CD4-positive, alpha-beta T cell (primary cell): ENCODE measurements at regions of chr7 and their contacts with region 1.

Region 1: DNA sequence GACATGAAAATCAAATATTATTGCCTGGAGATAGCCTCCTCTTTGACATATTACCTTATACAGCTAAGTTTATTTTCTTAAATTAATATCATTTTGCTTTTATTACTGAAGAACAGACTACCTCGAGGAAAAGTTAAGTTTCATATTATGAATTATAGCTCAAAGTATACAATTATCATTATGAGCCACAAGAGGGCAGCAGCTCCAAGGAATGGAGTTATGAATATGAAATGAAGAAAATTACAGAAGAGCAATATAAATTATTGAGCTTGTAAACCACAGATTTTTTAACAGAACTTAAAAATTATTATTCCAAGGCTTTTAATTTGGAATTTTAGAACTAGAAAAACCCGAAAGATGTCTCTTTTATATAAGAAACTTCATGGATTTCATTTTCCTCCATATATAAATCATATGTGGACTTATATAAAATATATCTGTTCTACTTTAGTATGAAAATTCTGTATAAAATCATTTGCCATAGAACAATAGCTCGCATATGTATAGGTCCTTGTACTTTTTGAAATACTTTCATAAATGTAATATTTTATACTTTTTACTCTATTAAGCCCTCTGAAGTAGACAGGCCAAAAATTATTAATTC is 40.1 kb downstream of the IQUB start:
- DNase-seq: peak in 9 of 14 experiments; percentile 1 to 68 (median 17)
- ATAC-seq: no peak
- H3K4me3 ChIP-seq: no peak overlapping the region
- H3K4me3 Mint-ChIP-seq: no peak overlapping the region
- H3K27ac ChIP-seq: no peak overlapping the region
- H3K27ac Mint-ChIP-seq: no peak overlapping the region
- H3K4me1 ChIP-seq: no peaks in the 10 kb centered on the region
- H3K4me1 Mint-ChIP-seq: no peaks in the 10 kb centered on the region
- H3K27me3 ChIP-seq: peaks cover 0 to 5% of the 10 kb centered on the region in 2 experiments
- H3K27me3 Mint-ChIP-seq: peaks cover 27% of the 10 kb centered on the region
- CTCF ChIP-seq: peak; percentile 86

Region 2: GRCh38 chr7:123534383-123535260 is 40.3 kb after region 1 on chr7 and contains the start of gene IQUB:
- CTCF ChIA-PET with region 1: interaction called, 4 read pairs
- POLR2A ChIA-PET with region 1: interaction called, 4 read pairs
- intact Hi-C with region 1: loop called (anchors 1 to 2 kb)
- DNase-seq: peak; percentile 88 to 99 (median 96)
- ATAC-seq: peak; percentile 83
- H3K4me3 ChIP-seq: peak within 1 kb of the TSS; percentile 78
- H3K4me3 Mint-ChIP-seq: peak within 1 kb of the TSS; percentile 91
- H3K27ac ChIP-seq: peak within 1 kb of the TSS in 1 of 2 donors; percentile 79
- H3K27ac Mint-ChIP-seq: peak within 1 kb of the TSS; percentile 40
- H3K4me1 ChIP-seq: peaks cover 23% of the 10 kb centered on the region
- H3K4me1 Mint-ChIP-seq: peaks cover 38% of the 10 kb centered on the region
- H3K27me3 ChIP-seq: peaks cover 4 to 12% of the 10 kb centered on the region in 2 experiments
- H3K27me3 Mint-ChIP-seq: peaks cover 21% of the 10 kb centered on the region
- CTCF ChIP-seq: no peak
- total RNA-seq, gene IQUB: not detected

Region 3: DNA sequence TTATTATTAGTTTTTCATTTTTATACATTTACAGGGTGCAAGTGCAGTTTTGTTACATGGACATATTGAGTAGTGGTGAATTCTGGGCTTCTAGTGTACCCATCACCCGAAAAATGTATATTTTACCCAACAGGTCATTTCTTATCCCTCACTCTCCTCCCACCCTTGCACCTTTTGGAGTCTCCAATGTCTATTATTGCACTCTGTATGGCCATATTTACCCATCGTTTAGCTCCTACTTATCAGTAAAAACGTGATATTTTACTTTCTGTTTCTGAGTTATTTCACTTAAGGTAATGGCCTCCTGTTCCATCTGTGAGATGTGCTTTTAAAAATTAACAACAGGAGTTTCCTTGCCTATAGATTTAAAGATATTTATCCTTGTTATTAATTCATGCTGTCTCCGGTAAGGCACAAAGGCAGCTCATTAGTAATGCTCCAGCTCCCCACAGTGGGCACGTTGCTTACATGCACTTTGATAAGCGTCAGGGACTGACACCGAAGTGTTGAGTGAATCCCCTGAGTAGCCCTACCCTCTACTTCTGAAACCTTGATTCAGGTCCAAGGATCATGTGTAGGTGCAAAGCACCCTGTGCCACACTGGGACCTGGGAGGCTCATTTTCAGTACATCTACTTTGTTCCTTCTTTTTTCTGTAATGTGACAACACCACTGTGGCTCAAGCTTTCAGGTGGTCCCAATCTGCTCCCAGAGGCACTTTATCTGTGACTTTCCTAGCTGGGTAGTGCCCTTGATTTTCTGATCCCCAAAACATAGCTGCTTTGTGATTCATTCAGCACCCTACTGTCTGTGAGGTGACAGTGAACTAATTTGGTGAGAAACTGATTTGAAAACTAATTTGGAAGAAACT is 377.9 kb after region 1 on chr7:
- CTCF ChIA-PET with region 1: interaction called, 3 read pairs
- POLR2A ChIA-PET with region 1: no interaction called
- intact Hi-C with region 1: loop called (anchors 1 to 2 kb)
- DNase-seq: peak in 11 of 14 experiments; percentile 3 to 54 (median 12)
- ATAC-seq: peak; percentile 39
- H3K4me3 ChIP-seq: no peak overlapping the region
- H3K4me3 Mint-ChIP-seq: no peak overlapping the region
- H3K27ac ChIP-seq: no peak overlapping the region
- H3K27ac Mint-ChIP-seq: no peak overlapping the region
- H3K4me1 ChIP-seq: no peaks in the 10 kb centered on the region
- H3K4me1 Mint-ChIP-seq: peaks cover 7% of the 10 kb centered on the region
- H3K27me3 ChIP-seq: peaks cover 3 to 14% of the 10 kb centered on the region in 2 experiments
- H3K27me3 Mint-ChIP-seq: peaks cover 28% of the 10 kb centered on the region
- CTCF ChIP-seq: no peak